CD8-positive, alpha-beta T cell (primary cell): ENCODE measurements at regions of chr1 and their contacts with region 1.

Region 1: DNA sequence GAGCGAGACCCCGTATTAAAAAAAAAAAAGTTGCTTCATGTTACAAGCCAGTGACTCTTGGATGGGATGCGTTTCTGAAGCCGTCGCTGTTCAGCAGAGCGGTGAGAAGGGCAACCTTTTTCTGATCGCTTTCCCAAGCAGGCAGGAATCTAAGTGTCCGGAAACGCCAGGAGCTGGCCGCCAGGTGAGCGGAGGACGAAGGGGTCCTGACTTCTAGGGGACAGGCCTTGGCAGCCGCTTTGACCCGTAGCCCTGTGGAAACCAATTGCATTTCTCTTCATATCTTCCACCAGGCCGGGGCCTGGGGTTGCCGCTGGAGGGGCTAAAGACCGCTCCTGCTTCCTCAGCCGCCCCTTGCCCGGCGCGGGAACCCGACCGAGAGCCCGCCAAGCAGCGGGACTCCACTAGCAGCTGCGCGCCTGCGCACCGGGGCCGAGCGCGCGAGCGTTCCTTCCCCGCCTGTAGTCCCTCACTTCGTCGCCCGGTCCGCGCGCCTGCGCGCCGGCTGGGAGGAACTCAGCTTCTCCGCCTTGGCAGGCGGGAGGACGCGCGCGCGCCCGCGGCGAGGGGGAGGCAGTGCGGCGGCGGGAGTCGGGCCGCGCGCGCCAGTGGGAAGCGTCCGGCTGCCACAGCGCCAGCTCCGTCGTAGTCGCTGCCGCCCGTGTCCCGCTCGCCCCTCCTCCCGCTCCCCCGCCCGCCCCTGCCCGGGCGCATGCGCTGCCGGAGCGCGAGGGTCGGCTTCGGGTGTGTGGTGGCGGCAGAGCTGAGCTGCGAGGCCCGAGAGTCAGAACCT is at the start of gene SPEN:
- DNase-seq: peak; percentile 95 to 99 (median 99)
- ATAC-seq: peak; percentile 80
- H3K4me3 ChIP-seq: peak within 1 kb of the TSS; percentile 96 to 99
- H3K4me3 Mint-ChIP-seq: peak within 1 kb of the TSS; percentile 98
- H3K27ac ChIP-seq: peak within 1 kb of the TSS; percentile 91 to 93
- H3K27ac Mint-ChIP-seq: peak within 1 kb of the TSS; percentile 97
- H3K4me1 ChIP-seq: peaks cover 24% of the 10 kb centered on the region
- H3K4me1 Mint-ChIP-seq: peaks cover 36% of the 10 kb centered on the region
- H3K27me3 ChIP-seq: no peaks in the 10 kb centered on the region
- H3K27me3 Mint-ChIP-seq: no peaks in the 10 kb centered on the region
- CTCF ChIP-seq: no peak
- total RNA-seq, gene SPEN: 85.9 to 87.3 TPM

Region 2: GRCh38 chr1:15337656-15338402 is 509.5 kb before region 1 on chr1:
- CTCF ChIA-PET with region 1: no interaction called
- POLR2A ChIA-PET with region 1: no interaction called
- intact Hi-C with region 1: no loop called
- DNase-seq: no peak
- ATAC-seq: no peak
- H3K4me3 ChIP-seq: no peak overlapping the region
- H3K4me3 Mint-ChIP-seq: no peak overlapping the region
- H3K27ac ChIP-seq: no peak overlapping the region
- H3K27ac Mint-ChIP-seq: no peak overlapping the region
- H3K4me1 ChIP-seq: no peaks in the 10 kb centered on the region
- H3K4me1 Mint-ChIP-seq: peaks cover 12% of the 10 kb centered on the region
- H3K27me3 ChIP-seq: no peaks in the 10 kb centered on the region
- H3K27me3 Mint-ChIP-seq: peaks cover 9% of the 10 kb centered on the region
- CTCF ChIP-seq: no peak

Region 3: DNA sequence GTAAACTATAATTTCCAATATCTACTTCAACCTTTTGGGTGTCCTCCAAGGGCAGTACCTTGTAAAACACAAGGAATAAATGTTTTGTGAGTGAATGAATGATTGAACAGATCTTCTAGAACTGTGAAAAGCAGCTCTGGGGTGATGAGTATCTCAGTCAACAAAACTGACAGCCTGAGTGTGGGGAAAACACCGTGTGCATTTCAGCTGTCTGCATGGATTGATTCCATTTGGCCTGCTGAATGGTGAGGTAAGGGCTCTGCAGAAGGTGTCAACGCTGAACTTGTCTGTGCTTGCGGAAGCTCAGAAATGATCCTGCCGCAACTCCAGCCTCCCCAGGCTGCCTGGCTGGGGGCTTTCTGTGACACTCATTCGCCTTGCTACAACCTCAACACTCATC is 255.0 kb before region 1 on chr1:
- CTCF ChIA-PET with region 1: no interaction called
- POLR2A ChIA-PET with region 1: no interaction called
- intact Hi-C with region 1: no loop called
- DNase-seq: no peak
- ATAC-seq: no peak
- H3K4me3 ChIP-seq: no peak overlapping the region
- H3K4me3 Mint-ChIP-seq: no peak overlapping the region
- H3K27ac ChIP-seq: no peak overlapping the region
- H3K27ac Mint-ChIP-seq: no peak overlapping the region
- H3K4me1 ChIP-seq: no peaks in the 10 kb centered on the region
- H3K4me1 Mint-ChIP-seq: no peaks in the 10 kb centered on the region
- H3K27me3 ChIP-seq: no peaks in the 10 kb centered on the region
- H3K27me3 Mint-ChIP-seq: no peaks in the 10 kb centered on the region
- CTCF ChIP-seq: no peak

Region 4: DNA sequence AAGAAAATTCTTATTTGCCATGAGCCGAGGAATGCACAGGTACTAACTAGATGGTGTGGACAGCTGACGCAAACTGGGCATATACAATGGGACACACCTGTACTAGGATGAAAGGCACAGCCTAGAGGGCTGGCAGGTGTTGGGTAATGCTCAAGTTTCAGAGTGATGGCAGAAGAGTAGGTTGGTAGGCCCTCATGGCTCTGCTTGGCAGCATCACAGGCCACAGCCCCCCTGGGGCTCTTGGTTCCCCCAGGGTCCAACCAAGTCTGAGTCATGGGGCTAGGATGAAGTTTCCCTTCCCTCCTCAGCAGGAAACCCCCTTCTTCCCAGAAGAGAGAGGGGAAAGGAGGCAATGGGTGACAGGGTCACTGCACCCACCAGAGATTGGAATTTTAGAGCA is 35.4 kb after region 1 on chr1:
- CTCF ChIA-PET with region 1: interaction called, 4 read pairs
- POLR2A ChIA-PET with region 1: interaction called, 3 read pairs
- intact Hi-C with region 1: loop called in 1 of 2 experiments (anchors 5 kb)
- DNase-seq: no peak
- ATAC-seq: no peak
- H3K4me3 ChIP-seq: no peak overlapping the region
- H3K4me3 Mint-ChIP-seq: no peak overlapping the region
- H3K27ac ChIP-seq: no peak overlapping the region
- H3K27ac Mint-ChIP-seq: peak overlapping the region; percentile 27
- H3K4me1 ChIP-seq: peaks cover 30% of the 10 kb centered on the region
- H3K4me1 Mint-ChIP-seq: peaks cover 66% of the 10 kb centered on the region
- H3K27me3 ChIP-seq: no peaks in the 10 kb centered on the region
- H3K27me3 Mint-ChIP-seq: no peaks in the 10 kb centered on the region
- CTCF ChIP-seq: no peak

Region 5: GRCh38 chr1:15918962-15919715 is 71.8 kb after region 1 on chr1:
- CTCF ChIA-PET with region 1: no interaction called
- POLR2A ChIA-PET with region 1: no interaction called
- intact Hi-C with region 1: loop called (anchors 2 to 5 kb)
- DNase-seq: peak in 7 of 9 experiments; percentile 16 to 76 (median 48)
- ATAC-seq: peak; percentile 82
- H3K4me3 ChIP-seq: no peak overlapping the region
- H3K4me3 Mint-ChIP-seq: no peak overlapping the region
- H3K27ac ChIP-seq: peak overlapping the region in 1 of 2 experiments; percentile 12
- H3K27ac Mint-ChIP-seq: peak overlapping the region; percentile 34
- H3K4me1 ChIP-seq: peaks cover 23% of the 10 kb centered on the region
- H3K4me1 Mint-ChIP-seq: peaks cover 32% of the 10 kb centered on the region
- H3K27me3 ChIP-seq: no peaks in the 10 kb centered on the region
- H3K27me3 Mint-ChIP-seq: no peaks in the 10 kb centered on the region
- CTCF ChIP-seq: no peak

Region 6: GRCh38 chr1:15975805-15976680 is 128.7 kb after region 1 on chr1 and contains the start of gene ZBTB17:
- CTCF ChIA-PET with region 1: interaction called, 3 read pairs
- POLR2A ChIA-PET with region 1: interaction called, 13 read pairs
- intact Hi-C with region 1: loop called in 1 of 2 experiments (anchors 2 kb)
- DNase-seq: peak; percentile 90 to 98 (median 95)
- ATAC-seq: peak; percentile 88
- H3K4me3 ChIP-seq: peak within 1 kb of the TSS; percentile 89 to 93
- H3K4me3 Mint-ChIP-seq: peak within 1 kb of the TSS; percentile 90
- H3K27ac ChIP-seq: peak within 1 kb of the TSS; percentile 68 to 87
- H3K27ac Mint-ChIP-seq: peak within 1 kb of the TSS; percentile 94
- H3K4me1 ChIP-seq: peaks cover 11% of the 10 kb centered on the region
- H3K4me1 Mint-ChIP-seq: peaks cover 38% of the 10 kb centered on the region
- H3K27me3 ChIP-seq: no peaks in the 10 kb centered on the region
- H3K27me3 Mint-ChIP-seq: no peaks in the 10 kb centered on the region
- CTCF ChIP-seq: no peak
- total RNA-seq, gene ZBTB17: 106 to 115 TPM

Region 7: DNA sequence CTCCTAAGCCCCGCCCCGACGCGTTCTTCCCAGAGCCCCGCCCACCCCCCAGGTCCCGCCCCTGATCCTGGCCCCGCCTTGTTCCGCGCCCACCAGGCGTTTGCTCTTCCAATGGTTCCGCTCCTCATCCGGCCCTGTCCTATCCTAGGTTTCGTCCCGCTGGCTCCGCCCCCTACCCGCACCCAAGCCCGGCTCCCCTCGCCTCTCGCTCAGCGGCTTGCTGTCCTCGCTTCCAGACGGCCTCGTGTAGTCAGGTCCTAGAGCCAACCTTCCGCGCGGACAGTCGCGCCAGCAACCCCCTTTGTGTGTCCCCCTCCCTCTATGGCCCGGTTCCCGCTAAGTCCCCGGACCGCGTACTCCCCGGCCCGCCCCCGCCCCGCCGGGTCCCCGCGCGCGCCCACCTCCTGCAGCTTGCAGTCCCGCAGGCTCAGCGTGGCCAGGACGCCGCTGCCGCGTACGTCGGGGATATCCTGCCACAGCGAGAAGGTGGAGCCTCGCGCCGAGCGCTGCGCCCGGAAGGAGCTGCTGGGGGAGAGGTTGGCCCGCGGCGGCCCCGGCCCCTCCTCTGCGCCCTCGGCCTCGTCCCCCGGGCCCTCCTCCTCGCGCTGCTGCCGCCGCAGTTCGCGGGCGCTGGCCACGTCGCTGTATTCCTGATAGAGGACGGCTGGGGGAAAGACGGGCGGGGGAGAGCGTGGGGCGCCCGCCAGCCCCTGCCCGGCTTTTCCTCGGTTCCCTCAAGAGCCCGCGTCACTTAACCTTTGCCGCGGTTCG is 359.4 kb after region 1 on chr1:
- CTCF ChIA-PET with region 1: no interaction called
- POLR2A ChIA-PET with region 1: no interaction called
- intact Hi-C with region 1: loop called in 1 of 2 experiments (anchors 10 kb)
- DNase-seq: peak; percentile 84 to 97 (median 93)
- ATAC-seq: peak; percentile 86
- H3K4me3 ChIP-seq: peak overlapping the region; percentile 68 to 83
- H3K4me3 Mint-ChIP-seq: peak overlapping the region; percentile 93
- H3K27ac ChIP-seq: peak overlapping the region; percentile 69 to 87
- H3K27ac Mint-ChIP-seq: peak overlapping the region; percentile 95
- H3K4me1 ChIP-seq: peaks cover 14% of the 10 kb centered on the region
- H3K4me1 Mint-ChIP-seq: peaks cover 10% of the 10 kb centered on the region
- H3K27me3 ChIP-seq: no peaks in the 10 kb centered on the region
- H3K27me3 Mint-ChIP-seq: no peaks in the 10 kb centered on the region
- CTCF ChIP-seq: no peak

Region 8: DNA sequence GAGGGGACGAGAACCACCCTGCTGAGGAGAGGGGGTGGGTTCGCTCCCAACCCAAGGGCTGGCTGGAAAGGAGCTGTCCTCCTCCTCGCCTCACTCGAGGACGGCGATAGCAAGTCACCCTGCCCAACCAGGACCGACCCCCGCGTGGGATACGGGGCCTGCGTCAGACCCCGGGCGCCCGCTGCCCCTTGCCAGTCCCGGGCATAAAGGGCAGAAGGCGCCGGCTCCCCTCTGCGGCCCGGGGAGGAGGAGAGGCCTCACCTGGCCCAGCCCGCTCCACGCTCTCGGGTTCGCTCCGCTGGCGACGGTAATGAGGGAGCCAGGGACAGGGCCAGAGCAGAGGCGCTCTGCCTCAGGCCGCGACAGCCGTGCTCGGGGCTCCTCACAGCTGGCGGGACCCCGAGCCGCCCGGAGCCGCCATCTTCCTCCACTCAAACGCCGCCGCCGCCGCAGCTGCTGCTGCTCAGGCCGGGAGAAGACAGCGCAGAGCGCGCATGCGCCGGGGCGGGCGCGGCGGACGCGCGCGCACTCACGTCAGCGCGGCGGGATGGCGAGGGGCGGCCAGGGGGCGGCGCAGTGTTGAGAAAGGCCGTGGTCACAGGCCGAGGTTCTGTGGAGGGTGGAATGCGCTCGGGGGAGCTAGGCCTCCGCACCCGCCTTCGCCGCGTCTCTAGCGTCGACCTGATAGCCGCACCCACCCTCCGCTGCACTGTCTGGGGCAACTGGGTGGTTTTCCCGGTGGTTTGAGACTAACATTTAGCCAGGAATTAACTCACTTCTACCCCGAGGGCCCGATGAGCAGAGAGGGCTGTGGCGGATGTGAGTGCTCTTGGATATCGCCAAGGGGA is 504.9 kb after region 1 on chr1 and contains the start of gene FBXO42:
- CTCF ChIA-PET with region 1: no interaction called
- POLR2A ChIA-PET with region 1: no interaction called
- intact Hi-C with region 1: loop called in 1 of 2 experiments (anchors 5 kb)
- DNase-seq: peak; percentile 82 to 97 (median 91)
- ATAC-seq: peak; percentile 90
- H3K4me3 ChIP-seq: peak within 1 kb of the TSS; percentile 59 to 89
- H3K4me3 Mint-ChIP-seq: peak within 1 kb of the TSS; percentile 92
- H3K27ac ChIP-seq: peak within 1 kb of the TSS; percentile 74 to 96
- H3K27ac Mint-ChIP-seq: peak within 1 kb of the TSS; percentile 93
- H3K4me1 ChIP-seq: peaks cover 22% of the 10 kb centered on the region
- H3K4me1 Mint-ChIP-seq: peaks cover 33% of the 10 kb centered on the region
- H3K27me3 ChIP-seq: no peaks in the 10 kb centered on the region
- H3K27me3 Mint-ChIP-seq: no peaks in the 10 kb centered on the region
- CTCF ChIP-seq: peak; percentile 37
- total RNA-seq, gene FBXO42: 18.0 to 18.2 TPM